ENCODE measurements at regions of chr7 and their contacts with region 1.

Region 1: DNA sequence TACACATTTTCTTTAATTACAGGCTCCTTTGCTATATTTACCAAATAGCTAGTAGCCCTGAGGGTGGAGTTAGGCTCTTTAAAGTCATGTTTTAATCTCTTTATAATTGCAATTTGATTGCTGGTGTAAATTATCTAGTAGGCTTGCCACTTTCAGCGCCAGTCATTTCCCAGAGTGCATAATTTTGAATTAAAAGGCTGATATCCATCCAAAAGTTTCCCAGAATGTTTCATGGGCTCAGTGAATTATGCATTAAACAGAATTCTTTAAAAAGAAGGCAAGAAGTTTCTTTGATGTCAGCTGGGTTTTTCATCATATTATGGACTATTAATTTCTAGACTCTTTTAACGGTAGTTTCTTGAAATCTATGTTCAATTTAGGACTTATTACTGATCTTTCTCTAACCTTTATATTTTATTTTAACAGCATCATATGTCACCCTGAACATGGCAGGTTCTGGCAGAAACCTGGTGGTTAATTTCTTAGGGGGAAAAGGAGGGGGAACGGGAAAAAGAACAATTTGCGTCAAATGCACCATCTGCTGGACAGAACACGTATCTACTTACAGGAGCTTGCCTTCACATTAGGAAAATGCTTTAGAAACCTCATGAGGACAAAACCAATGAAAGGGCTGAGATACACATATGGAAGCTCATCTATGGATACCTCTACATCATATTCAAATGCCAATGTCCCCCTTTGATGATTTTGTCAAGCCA is 171.1 kb downstream of the GRM3 start:
- DNase-seq: peak; percentile 20
- ATAC-seq: peak; percentile 59; the same call in 2 of the 3 replicates
- H3K4me3 ChIP-seq: no peak overlapping the region
- H3K27ac ChIP-seq: no peak overlapping the region
- H3K4me1 ChIP-seq: no peaks in the 10 kb centered on the region
- H3K27me3 ChIP-seq: no peaks in the 10 kb centered on the region
- CTCF ChIP-seq: peak; percentile 53
- EP300 ChIP-seq: no peak
- POLR2A ChIP-seq: no peak
- RAD21 ChIP-seq: no peak

Region 2: DNA sequence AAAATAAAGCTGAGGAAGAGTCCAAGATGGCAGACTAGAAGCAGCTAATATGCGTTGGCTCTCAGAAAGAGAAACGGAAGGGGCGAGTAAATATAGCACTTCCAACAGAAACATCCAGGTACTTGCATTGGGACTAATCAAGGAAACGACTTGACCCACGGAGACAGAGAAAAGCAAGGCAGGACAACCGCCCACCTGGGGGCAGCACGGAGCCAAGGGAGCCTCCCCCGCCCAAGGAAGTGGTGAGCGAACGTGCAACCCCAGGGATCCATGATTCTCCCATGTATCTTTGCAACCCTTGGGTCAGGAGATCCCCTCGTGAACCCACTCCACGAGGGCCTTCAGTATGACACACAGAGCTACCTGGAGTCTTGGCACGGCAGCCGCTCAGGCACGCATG is 216.5 kb before region 1 on chr7:
- CTCF ChIA-PET with region 1: no interaction called
- POLR2A ChIA-PET with region 1: no interaction called
- in situ Hi-C with region 1: no loop called
- intact Hi-C with region 1: loop called (anchors 1 kb)
- DNase-seq: peak; percentile 10
- ATAC-seq: peak; percentile 87
- H3K4me3 ChIP-seq: no peak overlapping the region
- H3K27ac ChIP-seq: no peak overlapping the region
- H3K4me1 ChIP-seq: no peaks in the 10 kb centered on the region
- H3K27me3 ChIP-seq: no peaks in the 10 kb centered on the region
- CTCF ChIP-seq: peak; percentile 69
- EP300 ChIP-seq: no peak
- POLR2A ChIP-seq: no peak
- RAD21 ChIP-seq: no peak

Region 3: GRCh38 chr7:86963599-86964230 is 148.9 kb after region 1 on chr7:
- CTCF ChIA-PET with region 1: no interaction called
- POLR2A ChIA-PET with region 1: no interaction called
- in situ Hi-C with region 1: no loop called
- intact Hi-C with region 1: no loop called
- DNase-seq: no peak
- ATAC-seq: no peak
- H3K4me3 ChIP-seq: no peak overlapping the region
- H3K27ac ChIP-seq: no peak overlapping the region
- H3K4me1 ChIP-seq: no peaks in the 10 kb centered on the region
- H3K27me3 ChIP-seq: no peaks in the 10 kb centered on the region; a peak in 1 of 5 replicates
- CTCF ChIP-seq: no peak
- EP300 ChIP-seq: no peak
- POLR2A ChIP-seq: no peak
- RAD21 ChIP-seq: no peak

Measured in HepG2 (cell line).